ENCODE measurements at regions of chr11 and their contacts with region 1.

Region 1: GRCh38 chr11:79363861-79364378 is 76.9 kb downstream of the TENM4 start:
- DNase-seq: peak; percentile 63
- H3K27ac ChIP-seq: no peak overlapping the region
- CTCF ChIP-seq: no peak

Region 2: GRCh38 chr11:79182794-79183193 is 181.1 kb before region 1 on chr11:
- CTCF ChIA-PET with region 1: no interaction called
- POLR2A ChIA-PET with region 1: no interaction called
- DNase-seq: no peak
- H3K27ac ChIP-seq: no peak overlapping the region
- CTCF ChIP-seq: no peak

Region 3: GRCh38 chr11:79493555-79494171 is 129.7 kb after region 1 on chr11:
- CTCF ChIA-PET with region 1: interaction called, 10 read pairs
- POLR2A ChIA-PET with region 1: no interaction called
- DNase-seq: peak; percentile 76
- H3K27ac ChIP-seq: no peak overlapping the region
- CTCF ChIP-seq: peak; percentile 90

Measured in RWPE1 (cell line).